ENCODE measurements at regions of chr15 and their contacts with region 1.

Region 1: GRCh38 chr15:39756806-39757522 is 25.7 kb downstream of the FSIP1 start:
- DNase-seq: peak; percentile 60 to 76 (median 72)
- H3K4me3 ChIP-seq: no peak overlapping the region
- H3K27ac ChIP-seq: no peak overlapping the region
- H3K4me1 ChIP-seq: no peaks in the 10 kb centered on the region
- H3K27me3 ChIP-seq: no peaks in the 10 kb centered on the region

Region 2: DNA sequence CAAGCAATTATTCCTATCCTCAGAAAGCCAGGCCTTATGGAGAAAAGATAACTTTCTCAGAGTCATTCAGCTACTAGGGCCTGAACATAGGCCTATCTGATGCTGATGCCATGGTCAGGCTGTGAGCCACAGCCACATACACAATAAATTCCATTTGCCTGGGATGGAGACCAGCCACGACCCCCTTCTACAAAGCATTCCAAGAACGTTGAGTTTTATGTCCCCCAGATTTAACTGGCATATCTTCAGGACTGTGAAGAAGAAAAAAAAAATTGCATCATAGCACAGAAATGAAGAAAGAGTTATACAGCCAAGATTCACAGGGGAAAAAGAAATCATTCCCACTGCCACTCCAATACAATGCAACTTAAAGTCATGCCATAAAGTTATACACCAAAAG is 76.1 kb before region 1 on chr15:
- CTCF ChIA-PET with region 1: interaction called, 61 read pairs
- POLR2A ChIA-PET with region 1: interaction called, 3 read pairs
- DNase-seq: no peak
- H3K4me3 ChIP-seq: no peak overlapping the region
- H3K27ac ChIP-seq: no peak overlapping the region
- H3K4me1 ChIP-seq: no peaks in the 10 kb centered on the region
- H3K27me3 ChIP-seq: no peaks in the 10 kb centered on the region

Region 3: GRCh38 chr15:39686000-39686613 is 70.9 kb before region 1 on chr15:
- CTCF ChIA-PET with region 1: interaction called, 61 read pairs
- POLR2A ChIA-PET with region 1: interaction called, 3 read pairs
- DNase-seq: peak; percentile 57 to 74 (median 67)
- H3K4me3 ChIP-seq: no peak overlapping the region
- H3K27ac ChIP-seq: no peak overlapping the region
- H3K4me1 ChIP-seq: no peaks in the 10 kb centered on the region
- H3K27me3 ChIP-seq: peaks cover 0 to 1% (median 0%) of the 10 kb centered on the region in 5 experiments

Region 4: DNA sequence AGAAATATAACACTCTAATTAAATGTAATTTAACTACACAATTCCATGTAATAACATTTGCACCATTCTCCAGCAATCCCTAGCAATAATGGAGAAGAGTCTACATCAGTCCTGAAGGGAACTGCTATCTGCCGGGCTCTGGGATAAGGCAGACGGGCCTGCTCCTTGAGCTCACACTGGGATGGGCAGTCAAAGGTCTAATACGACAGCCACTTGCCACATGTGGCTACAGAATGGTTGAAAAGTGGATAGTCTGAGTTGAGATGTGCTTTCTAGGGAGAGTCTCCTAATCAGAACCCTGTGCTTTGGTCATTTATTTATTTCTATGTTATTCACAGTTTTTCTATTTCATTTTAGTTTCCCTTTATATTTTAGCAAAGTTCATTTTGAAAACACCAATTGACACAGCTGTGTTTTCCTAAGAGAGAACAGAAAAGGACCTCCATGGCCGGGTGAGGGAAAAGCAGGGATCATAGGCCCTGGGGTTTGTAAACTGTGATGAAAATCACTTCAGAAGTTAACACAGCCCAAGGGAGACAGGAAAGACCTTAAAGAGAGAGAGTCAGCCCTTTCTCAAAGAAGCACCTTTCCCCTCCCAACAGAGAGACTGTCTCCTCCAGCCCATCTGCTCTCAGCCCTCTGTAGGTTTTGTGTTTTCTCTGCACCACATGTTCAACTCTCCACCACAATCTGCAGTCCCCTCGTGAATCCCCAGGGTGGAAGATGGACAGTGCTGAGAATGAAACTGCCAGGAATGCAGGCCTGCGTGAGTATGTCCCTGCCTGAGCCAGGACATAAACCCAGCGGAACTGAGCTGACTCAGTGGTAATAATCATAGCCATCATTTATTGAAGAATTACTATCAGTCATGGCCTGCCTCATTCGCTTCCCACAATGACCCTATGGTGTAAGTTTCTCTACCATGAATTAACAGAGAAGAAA is 14.1 kb after region 1 on chr15:
- CTCF ChIA-PET with region 1: interaction called, 24 read pairs
- POLR2A ChIA-PET with region 1: no interaction called
- DNase-seq: peak in 1 of 3 donors; percentile 40
- H3K4me3 ChIP-seq: peak overlapping the region in 1 of 7 experiments; percentile 46
- H3K27ac ChIP-seq: peak overlapping the region; percentile 2 to 46
- H3K4me1 ChIP-seq: peaks cover 5 to 30% (median 15%) of the 10 kb centered on the region in 4 experiments
- H3K27me3 ChIP-seq: no peaks in the 10 kb centered on the region

Measured in common myeloid progenitor, CD34-positive (primary cell).